ENCODE measurements at regions of chr5 and their contacts with region 1.

Region 1: GRCh38 chr5:140372971-140373487 is 13.0 kb downstream of the SLC4A9 start:
- DNase-seq: peak; percentile 60
- ATAC-seq: peak; percentile 73
- H3K4me3 Mint-ChIP-seq: no peak overlapping the region
- H3K27ac Mint-ChIP-seq: no peak overlapping the region
- H3K4me1 Mint-ChIP-seq: no peaks in the 10 kb centered on the region
- H3K27me3 Mint-ChIP-seq: no peaks in the 10 kb centered on the region

Region 2: DNA sequence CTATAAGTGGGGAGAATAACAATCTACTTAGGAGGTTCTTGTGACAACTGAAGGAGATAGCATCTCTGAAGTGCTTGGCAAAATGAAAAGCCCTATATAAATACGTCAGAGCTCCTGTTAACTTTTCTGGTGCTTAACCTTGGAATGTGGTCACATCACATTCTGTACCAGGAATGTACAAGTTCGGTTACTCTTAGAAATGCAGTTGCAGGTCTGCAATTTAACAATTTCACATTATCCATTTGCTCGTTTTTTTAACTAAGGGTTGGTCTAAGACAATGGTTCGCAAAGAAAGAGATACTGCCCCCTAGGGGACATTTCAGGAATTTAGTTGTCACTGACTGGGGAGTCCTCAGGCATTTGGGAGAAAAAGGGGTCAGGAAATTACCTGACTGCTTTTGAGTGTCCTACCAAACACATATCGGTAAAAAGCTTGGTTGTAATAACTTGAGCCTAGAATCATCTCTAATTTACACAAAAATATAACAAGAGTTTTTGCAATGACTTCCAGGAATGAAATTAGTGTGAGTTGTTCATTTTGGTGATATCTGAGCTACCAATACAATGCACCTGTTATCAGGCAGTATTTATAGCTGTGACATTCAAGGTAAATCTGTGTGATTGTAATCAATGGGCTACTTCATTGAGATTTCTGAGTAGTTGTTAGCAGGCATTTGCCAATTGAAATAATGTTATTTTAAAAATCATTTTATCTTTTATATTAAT is 21.3 kb before region 1 on chr5:
- CTCF ChIA-PET with region 1: interaction called, 15 read pairs
- POLR2A ChIA-PET with region 1: no interaction called
- intact Hi-C with region 1: no loop called
- DNase-seq: peak; percentile 65
- ATAC-seq: peak; percentile 90
- H3K4me3 Mint-ChIP-seq: no peak overlapping the region
- H3K27ac Mint-ChIP-seq: no peak overlapping the region
- H3K4me1 Mint-ChIP-seq: peaks cover 7% of the 10 kb centered on the region
- H3K27me3 Mint-ChIP-seq: no peaks in the 10 kb centered on the region

Region 3: DNA sequence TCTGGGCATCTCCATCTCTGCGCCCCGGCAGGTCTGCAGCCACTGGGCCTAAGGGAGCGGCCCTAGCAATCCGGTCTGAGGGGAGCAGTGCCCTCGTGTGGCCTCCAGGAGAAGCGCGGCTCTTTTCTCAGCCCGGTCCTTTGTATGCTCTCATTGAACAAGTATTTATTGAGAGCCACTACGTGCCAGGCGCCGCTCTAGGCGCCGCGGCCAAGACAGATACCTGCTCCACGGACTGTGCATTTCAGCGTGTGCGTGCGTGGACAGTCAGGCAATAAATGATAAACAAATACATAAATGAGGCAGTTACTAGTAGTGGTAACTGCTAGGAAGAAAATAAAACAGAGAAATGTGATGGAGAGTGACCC is 15.3 kb before region 1 on chr5:
- CTCF ChIA-PET with region 1: interaction called, 20 read pairs
- POLR2A ChIA-PET with region 1: interaction called, 3 read pairs
- intact Hi-C with region 1: no loop called
- DNase-seq: peak; percentile 89
- ATAC-seq: peak; percentile 98
- H3K4me3 Mint-ChIP-seq: peak overlapping the region; percentile 48
- H3K27ac Mint-ChIP-seq: peak overlapping the region; percentile 44
- H3K4me1 Mint-ChIP-seq: peaks cover 12% of the 10 kb centered on the region
- H3K27me3 Mint-ChIP-seq: peaks cover 8% of the 10 kb centered on the region

Region 4: GRCh38 chr5:140632150-140633020 is 259.4 kb after region 1 on chr5:
- CTCF ChIA-PET with region 1: interaction called, 8 read pairs
- POLR2A ChIA-PET with region 1: no interaction called
- intact Hi-C with region 1: loop called (anchors 1 to 5 kb)
- DNase-seq: peak; percentile 69
- ATAC-seq: peak; percentile 67
- H3K4me3 Mint-ChIP-seq: peak overlapping the region; percentile 74
- H3K27ac Mint-ChIP-seq: peak overlapping the region; percentile 73
- H3K4me1 Mint-ChIP-seq: peaks cover 31% of the 10 kb centered on the region
- H3K27me3 Mint-ChIP-seq: peaks cover 14% of the 10 kb centered on the region

Region 5: GRCh38 chr5:140639148-140639979 is 266.3 kb after region 1 on chr5 and contains the start of gene TMCO6:
- CTCF ChIA-PET with region 1: interaction called, 8 read pairs
- POLR2A ChIA-PET with region 1: no interaction called
- intact Hi-C with region 1: loop called (anchors 1 to 5 kb)
- DNase-seq: peak; percentile 99
- ATAC-seq: peak; percentile 94
- H3K4me3 Mint-ChIP-seq: peak within 1 kb of the TSS; percentile 93
- H3K27ac Mint-ChIP-seq: peak within 1 kb of the TSS; percentile 95
- H3K4me1 Mint-ChIP-seq: peaks cover 39% of the 10 kb centered on the region
- H3K27me3 Mint-ChIP-seq: no peaks in the 10 kb centered on the region
- total RNA-seq, gene TMCO6: 36.5 to 36.6 TPM

Region 6: DNA sequence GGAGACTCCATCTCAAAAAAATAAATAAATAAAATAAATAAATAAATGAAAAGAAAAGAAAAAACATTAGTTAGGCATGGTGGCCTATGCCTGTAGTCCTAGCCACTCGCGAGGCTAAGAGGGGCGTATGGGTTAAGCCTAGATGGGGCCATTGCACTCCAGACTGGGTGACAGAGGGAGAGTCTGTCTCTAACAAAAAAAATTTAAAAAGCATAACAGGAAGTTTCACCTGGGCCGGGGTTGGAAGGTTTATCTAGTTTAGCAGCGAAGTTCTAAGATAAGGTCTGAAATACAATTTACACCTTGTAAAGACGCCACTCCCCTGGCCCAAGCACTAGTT is 345.2 kb after region 1 on chr5:
- CTCF ChIA-PET with region 1: interaction called, 9 read pairs
- POLR2A ChIA-PET with region 1: no interaction called
- intact Hi-C with region 1: loop called in 1 of 2 experiments (anchors 1 kb)
- DNase-seq: no peak
- ATAC-seq: no peak
- H3K4me3 Mint-ChIP-seq: no peak overlapping the region
- H3K27ac Mint-ChIP-seq: no peak overlapping the region
- H3K4me1 Mint-ChIP-seq: peaks cover 4% of the 10 kb centered on the region
- H3K27me3 Mint-ChIP-seq: peaks cover 7% of the 10 kb centered on the region

Measured in activated CD4-positive, alpha-beta T cell treated with anti-CD3 and anti-CD28 coated beads for 36 hours (primary cell).